A673 (cell line): ENCODE measurements at regions of chr9 and their contacts with region 1.

Region 1: GRCh38 chr9:131762356-131762932 is 22.6 kb upstream of the RAPGEF1 start:
- DNase-seq: peak; percentile 73
- H3K4me3 ChIP-seq: no peak overlapping the region
- H3K27ac ChIP-seq: no peak overlapping the region
- H3K4me1 ChIP-seq: no peaks in the 10 kb centered on the region
- H3K27me3 ChIP-seq: peaks cover 35% of the 10 kb centered on the region
- CTCF ChIP-seq: peak; percentile 91

Region 2: GRCh38 chr9:132250324-132251262 is 488.1 kb after region 1 on chr9:
- CTCF ChIA-PET with region 1: interaction called, 3 read pairs
- POLR2A ChIA-PET with region 1: no interaction called
- intact Hi-C with region 1: loop called (anchors 5 kb)
- DNase-seq: no peak
- H3K4me3 ChIP-seq: no peak overlapping the region
- H3K27ac ChIP-seq: no peak overlapping the region
- H3K4me1 ChIP-seq: peaks cover 11% of the 10 kb centered on the region
- H3K27me3 ChIP-seq: no peaks in the 10 kb centered on the region
- CTCF ChIP-seq: no peak

Region 3: DNA sequence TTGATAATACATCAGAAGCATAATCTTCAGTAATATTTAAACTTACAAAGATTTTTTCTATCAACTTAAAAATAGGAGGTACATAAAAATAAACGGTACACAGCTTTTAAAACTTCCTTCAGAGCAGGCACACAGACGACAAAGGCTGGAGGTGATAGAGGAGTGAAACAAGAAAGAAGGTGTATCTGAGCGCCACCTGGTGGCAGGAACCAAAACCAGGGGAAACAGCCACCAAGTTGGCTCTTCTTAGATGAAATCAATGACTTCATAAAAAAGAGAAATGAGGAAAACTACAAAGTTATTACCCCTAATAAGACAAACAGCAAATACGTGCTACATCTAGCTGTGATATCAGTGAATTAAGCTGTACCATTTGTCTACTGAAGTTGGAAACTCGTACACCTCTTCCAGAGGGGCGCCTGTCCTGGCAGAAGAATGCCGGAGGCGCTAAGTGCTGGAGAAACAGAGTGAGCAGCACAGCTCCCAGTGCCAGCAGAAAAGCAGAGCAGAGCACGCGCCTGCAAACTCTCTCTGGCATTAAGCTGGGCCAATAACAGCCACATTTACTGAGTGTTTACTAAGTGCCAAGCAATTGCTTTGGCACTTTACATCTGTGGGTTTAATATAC is 506.4 kb after region 1 on chr9:
- CTCF ChIA-PET with region 1: no interaction called
- POLR2A ChIA-PET with region 1: no interaction called
- intact Hi-C with region 1: loop called (anchors 2 kb)
- DNase-seq: peak; percentile 78
- H3K4me3 ChIP-seq: no peak overlapping the region
- H3K27ac ChIP-seq: no peak overlapping the region
- H3K4me1 ChIP-seq: no peaks in the 10 kb centered on the region
- H3K27me3 ChIP-seq: no peaks in the 10 kb centered on the region
- CTCF ChIP-seq: peak; percentile 94